Prostate gland (tissue), 2 donors: ENCODE measurements at regions of chr1 and their contacts with region 1.

Region 1: GRCh38 chr1:34742667-34743270 is 12.1 kb upstream of the GJB5 start:
- DNase-seq: peak; percentile 65
- H3K4me3 ChIP-seq: no peak overlapping the region
- H3K27ac ChIP-seq: no peak overlapping the region
- H3K4me1 ChIP-seq: no peaks in the 10 kb centered on the region
- H3K27me3 ChIP-seq: no peaks in the 10 kb centered on the region
- CTCF ChIP-seq: peak; percentile 78 to 89 (median 82)
- POLR2A ChIP-seq: no peak

Region 2: GRCh38 chr1:33633019-33633801 is 1109.6 kb before region 1 on chr1:
- intact Hi-C with region 1: loop called (anchors 2 kb)
- DNase-seq: peak; percentile 89
- H3K4me3 ChIP-seq: no peak overlapping the region
- H3K27ac ChIP-seq: no peak overlapping the region
- H3K4me1 ChIP-seq: no peaks in the 10 kb centered on the region
- H3K27me3 ChIP-seq: no peaks in the 10 kb centered on the region
- CTCF ChIP-seq: peak; percentile 86 to 96 (median 92)
- POLR2A ChIP-seq: no peak

Region 3: GRCh38 chr1:34663031-34663430 is 79.7 kb before region 1 on chr1:
- intact Hi-C with region 1: no loop called
- DNase-seq: no peak
- H3K4me3 ChIP-seq: no peak overlapping the region
- H3K27ac ChIP-seq: no peak overlapping the region
- H3K4me1 ChIP-seq: no peaks in the 10 kb centered on the region
- H3K27me3 ChIP-seq: peaks cover 3% of the 10 kb centered on the region
- CTCF ChIP-seq: no peak
- POLR2A ChIP-seq: no peak

Region 4: DNA sequence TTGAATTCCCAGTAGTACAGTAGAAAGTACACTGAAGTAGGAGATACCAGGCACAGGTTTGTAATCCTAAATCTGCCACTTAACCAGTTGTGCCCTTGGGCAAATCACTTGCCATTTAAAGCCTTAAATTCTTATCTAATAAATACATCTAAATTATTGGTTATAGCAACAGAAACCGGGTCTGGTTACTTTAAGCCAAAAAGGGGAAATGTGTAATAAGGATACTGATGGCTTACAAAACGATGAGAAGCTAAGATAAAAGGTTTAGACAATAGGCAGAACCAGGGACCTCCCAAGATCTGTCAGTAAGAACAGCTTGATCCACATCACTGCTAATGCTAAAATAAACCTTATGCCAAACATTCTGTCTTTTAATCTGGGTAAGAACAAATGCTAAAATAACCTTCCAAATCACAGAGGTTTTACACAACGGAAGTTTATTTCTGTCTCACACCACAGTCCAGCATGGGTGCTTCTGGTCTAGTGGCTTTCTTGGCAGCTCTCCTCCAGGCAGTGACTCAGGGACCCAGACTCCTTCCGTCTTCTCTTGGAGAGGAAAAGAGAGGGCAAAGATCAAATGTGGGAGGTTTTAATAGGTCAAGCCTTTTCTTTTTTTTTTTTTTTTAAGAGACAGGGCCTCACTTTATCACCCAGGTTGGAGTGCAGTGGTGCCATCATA is 319.9 kb after region 1 on chr1:
- intact Hi-C with region 1: no loop called
- DNase-seq: no peak
- H3K4me3 ChIP-seq: no peak overlapping the region
- H3K27ac ChIP-seq: no peak overlapping the region
- H3K4me1 ChIP-seq: no peaks in the 10 kb centered on the region
- H3K27me3 ChIP-seq: no peaks in the 10 kb centered on the region
- CTCF ChIP-seq: no peak
- POLR2A ChIP-seq: no peak